ENCODE measurements at regions of chr19 and their contacts with region 1.

Region 1: DNA sequence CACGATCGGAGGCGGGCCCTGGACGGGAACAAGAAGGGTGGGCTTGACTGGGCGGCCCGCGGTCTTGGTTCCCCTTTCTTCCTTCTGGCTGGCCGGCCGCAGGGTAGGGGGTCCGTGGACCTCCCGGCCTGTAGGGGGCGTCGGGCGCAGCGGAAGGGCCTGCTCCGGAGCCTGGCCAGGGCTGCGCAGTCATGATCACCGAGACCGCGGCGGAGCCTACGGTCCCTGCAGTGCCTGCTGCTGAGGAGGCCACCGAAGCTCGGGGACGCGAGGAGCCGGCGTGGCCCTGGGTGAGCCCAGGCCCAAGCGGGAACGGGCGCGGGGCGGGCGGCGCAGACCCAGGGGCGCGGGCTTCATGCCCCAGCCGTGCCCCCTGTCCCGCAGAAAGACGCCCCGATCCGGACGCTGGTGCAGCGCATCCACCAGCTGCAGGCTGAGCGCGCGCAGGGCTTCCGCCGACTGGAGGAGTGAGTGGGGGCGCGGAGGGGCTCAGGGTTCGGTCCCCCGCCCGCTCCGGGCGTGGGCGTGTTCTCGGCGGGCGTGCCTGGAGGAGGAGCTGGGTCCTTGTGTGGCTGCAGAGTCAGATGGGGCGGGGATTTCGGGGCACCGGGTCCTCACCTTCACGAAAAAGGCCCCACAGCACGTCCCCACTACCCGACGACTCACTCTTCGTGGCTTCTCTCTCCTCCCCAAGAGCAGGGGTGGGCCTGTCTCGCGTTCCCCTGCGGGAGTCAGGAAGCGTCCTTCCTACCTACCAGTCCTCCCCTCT is at the start of gene REX1BD:
- DNase-seq: peak; percentile 87
- ATAC-seq: peak; percentile 51
- H3K4me3 Mint-ChIP-seq: peak within 1 kb of the TSS; percentile 86
- H3K27ac Mint-ChIP-seq: peak within 1 kb of the TSS; percentile 98
- H3K4me1 Mint-ChIP-seq: peaks cover 32% of the 10 kb centered on the region
- H3K27me3 Mint-ChIP-seq: peaks cover 10% of the 10 kb centered on the region
- CTCF ChIP-seq: peak; percentile 85
- total RNA-seq, gene REX1BD: 90.2 to 107 TPM (median 99.0 TPM) in 3 replicates

Region 2: GRCh38 chr19:18557474-18558201 is 31.2 kb before region 1 on chr19 and contains the start of gene KXD1:
- CTCF ChIA-PET with region 1: interaction called, 15 read pairs
- POLR2A ChIA-PET with region 1: interaction called, 11 read pairs
- DNase-seq: peak; percentile 79
- ATAC-seq: peak; percentile 91
- H3K4me3 Mint-ChIP-seq: peak within 1 kb of the TSS; percentile 87
- H3K27ac Mint-ChIP-seq: peak within 1 kb of the TSS; percentile 73
- H3K4me1 Mint-ChIP-seq: peaks cover 8% of the 10 kb centered on the region
- H3K27me3 Mint-ChIP-seq: no peaks in the 10 kb centered on the region
- CTCF ChIP-seq: no peak
- total RNA-seq, gene KXD1: 136 to 155 TPM (median 154 TPM) in 3 replicates

Region 3: GRCh38 chr19:18571564-18572300 is 17.1 kb before region 1 on chr19 and contains the start of gene UBA52:
- CTCF ChIA-PET with region 1: interaction called, 34 read pairs
- POLR2A ChIA-PET with region 1: interaction called, 18 read pairs
- DNase-seq: peak; percentile 99
- ATAC-seq: peak; percentile 92
- H3K4me3 Mint-ChIP-seq: peak within 1 kb of the TSS; percentile 76
- H3K27ac Mint-ChIP-seq: peak within 1 kb of the TSS; percentile 98
- H3K4me1 Mint-ChIP-seq: peaks cover 16% of the 10 kb centered on the region
- H3K27me3 Mint-ChIP-seq: no peaks in the 10 kb centered on the region
- CTCF ChIP-seq: no peak
- total RNA-seq, gene UBA52: 1,300 to 1,361 TPM (median 1,328 TPM) in 3 replicates

Region 4: GRCh38 chr19:18603255-18603957 is 14.6 kb after region 1 on chr19:
- CTCF ChIA-PET with region 1: interaction called, 29 read pairs
- POLR2A ChIA-PET with region 1: interaction called, 5 read pairs
- DNase-seq: peak; percentile 64
- ATAC-seq: peak; percentile 52
- H3K4me3 Mint-ChIP-seq: peak overlapping the region; percentile 58
- H3K27ac Mint-ChIP-seq: no peak overlapping the region
- H3K4me1 Mint-ChIP-seq: peaks cover 34% of the 10 kb centered on the region
- H3K27me3 Mint-ChIP-seq: peaks cover 83% of the 10 kb centered on the region
- CTCF ChIP-seq: no peak

Region 5: GRCh38 chr19:18612772-18613588 is 24.2 kb after region 1 on chr19 and contains the start of gene TMEM59L:
- CTCF ChIA-PET with region 1: interaction called, 14 read pairs
- POLR2A ChIA-PET with region 1: interaction called, 8 read pairs
- DNase-seq: peak; percentile 60
- ATAC-seq: no peak; the same call in 1 of the 2 replicates
- H3K4me3 Mint-ChIP-seq: peak within 1 kb of the TSS; percentile 80
- H3K27ac Mint-ChIP-seq: no peak within 1 kb of the TSS
- H3K4me1 Mint-ChIP-seq: peaks cover 38% of the 10 kb centered on the region
- H3K27me3 Mint-ChIP-seq: peaks cover 78% of the 10 kb centered on the region
- CTCF ChIP-seq: no peak
- total RNA-seq, gene TMEM59L: 14.8 to 30.0 TPM (median 27.3 TPM) in 3 replicates

Region 6: DNA sequence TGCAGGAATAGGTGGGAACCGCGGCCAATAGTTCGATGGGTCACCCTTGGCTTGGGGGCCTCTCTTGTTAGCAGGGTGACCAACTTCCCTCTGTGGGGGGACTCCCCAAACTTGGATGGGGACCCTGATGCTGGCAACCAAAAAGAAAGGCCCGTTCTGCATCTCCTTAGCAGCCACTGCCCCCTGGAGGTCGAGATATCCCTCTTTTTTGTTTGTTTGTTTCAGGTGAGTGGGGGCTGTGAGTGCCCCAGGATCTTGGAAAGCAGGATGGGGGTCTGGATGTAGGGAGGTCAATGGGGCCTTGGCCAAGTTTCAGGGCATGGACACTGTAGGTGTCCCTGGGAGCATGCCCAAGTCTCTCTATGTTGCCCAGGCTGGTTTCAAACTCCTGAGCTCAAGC is 87.0 kb after region 1 on chr19:
- CTCF ChIA-PET with region 1: interaction called, 39 read pairs
- POLR2A ChIA-PET with region 1: interaction called, 3 read pairs
- DNase-seq: peak; percentile 65
- ATAC-seq: peak; percentile 26
- H3K4me3 Mint-ChIP-seq: no peak overlapping the region
- H3K27ac Mint-ChIP-seq: no peak overlapping the region
- H3K4me1 Mint-ChIP-seq: peaks cover 18% of the 10 kb centered on the region
- H3K27me3 Mint-ChIP-seq: no peaks in the 10 kb centered on the region
- CTCF ChIP-seq: peak; percentile 45; the same call in 1 of the 2 replicates

Measured in WTC11 (cell line).